ENCODE measurements at regions of chr12 and their contacts with region 1.

Region 1: GRCh38 chr12:40152783-40153383 is 47.0 kb upstream of the SLC2A13 start:
- DNase-seq: peak; percentile 41 to 67 (median 64)
- ATAC-seq: peak; percentile 63
- H3K4me3 ChIP-seq: no peak overlapping the region
- H3K27ac ChIP-seq: no peak overlapping the region
- H3K4me1 ChIP-seq: no peaks in the 10 kb centered on the region
- H3K27me3 ChIP-seq: no peaks in the 10 kb centered on the region
- CTCF ChIP-seq: peak; percentile 47 to 96 (median 73)
- POLR2A ChIP-seq: no peak

Region 2: GRCh38 chr12:39972119-39972518 is 180.8 kb before region 1 on chr12:
- intact Hi-C with region 1: no loop called
- DNase-seq: no peak
- ATAC-seq: no peak
- H3K4me3 ChIP-seq: no peak overlapping the region
- H3K27ac ChIP-seq: no peak overlapping the region
- H3K4me1 ChIP-seq: no peaks in the 10 kb centered on the region
- H3K27me3 ChIP-seq: no peaks in the 10 kb centered on the region
- CTCF ChIP-seq: no peak
- POLR2A ChIP-seq: no peak

Region 3: DNA sequence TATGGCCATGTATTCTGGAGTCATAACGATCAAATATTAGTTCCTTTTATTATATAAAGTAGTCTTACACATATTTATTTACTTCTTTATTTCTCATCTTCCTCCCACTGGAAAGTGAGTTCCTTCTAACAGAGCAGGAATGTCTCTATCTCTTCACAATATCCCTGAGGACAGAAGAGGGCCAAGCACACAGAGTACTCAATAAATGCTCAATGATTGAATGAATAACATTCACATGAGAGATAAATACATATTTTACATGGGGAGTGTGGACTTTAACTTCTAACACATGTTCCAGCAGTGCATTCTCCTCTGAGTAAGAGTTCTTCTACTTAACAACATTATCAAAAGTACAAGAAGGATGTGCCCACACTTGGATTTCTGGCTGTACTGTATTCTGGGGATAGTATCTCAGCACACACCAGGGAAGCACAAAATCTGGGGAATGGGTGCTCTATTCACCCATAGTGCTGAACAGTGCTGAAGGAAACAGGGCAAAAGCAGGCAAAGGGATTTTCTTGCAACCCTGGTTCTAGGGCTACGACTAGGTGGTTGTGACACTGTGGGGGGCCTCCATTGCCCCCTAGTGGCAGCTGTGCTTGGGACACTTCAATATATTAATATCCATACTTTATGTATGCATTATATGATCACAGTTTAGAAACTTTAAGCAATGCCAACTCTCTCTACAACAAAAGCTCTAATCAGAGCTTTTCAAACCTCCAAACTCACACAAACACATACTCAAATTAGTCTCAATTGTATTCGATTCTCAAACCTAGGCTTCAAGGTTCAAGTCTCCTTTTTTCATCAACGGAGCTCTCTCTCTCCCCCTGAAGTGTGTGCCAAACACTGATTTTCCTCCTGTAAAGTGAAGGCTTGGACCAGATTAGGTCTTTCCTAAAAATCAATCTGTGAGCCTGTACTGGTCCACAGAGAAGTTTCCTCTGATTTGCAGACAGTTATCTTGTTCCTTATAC is 162.5 kb before region 1 on chr12:
- intact Hi-C with region 1: no loop called
- DNase-seq: peak; percentile 59 to 78 (median 62)
- ATAC-seq: peak; percentile 65
- H3K4me3 ChIP-seq: no peak overlapping the region
- H3K27ac ChIP-seq: no peak overlapping the region
- H3K4me1 ChIP-seq: no peaks in the 10 kb centered on the region
- H3K27me3 ChIP-seq: no peaks in the 10 kb centered on the region
- CTCF ChIP-seq: peak; percentile 65 to 86 (median 77)
- POLR2A ChIP-seq: no peak

Region 4: DNA sequence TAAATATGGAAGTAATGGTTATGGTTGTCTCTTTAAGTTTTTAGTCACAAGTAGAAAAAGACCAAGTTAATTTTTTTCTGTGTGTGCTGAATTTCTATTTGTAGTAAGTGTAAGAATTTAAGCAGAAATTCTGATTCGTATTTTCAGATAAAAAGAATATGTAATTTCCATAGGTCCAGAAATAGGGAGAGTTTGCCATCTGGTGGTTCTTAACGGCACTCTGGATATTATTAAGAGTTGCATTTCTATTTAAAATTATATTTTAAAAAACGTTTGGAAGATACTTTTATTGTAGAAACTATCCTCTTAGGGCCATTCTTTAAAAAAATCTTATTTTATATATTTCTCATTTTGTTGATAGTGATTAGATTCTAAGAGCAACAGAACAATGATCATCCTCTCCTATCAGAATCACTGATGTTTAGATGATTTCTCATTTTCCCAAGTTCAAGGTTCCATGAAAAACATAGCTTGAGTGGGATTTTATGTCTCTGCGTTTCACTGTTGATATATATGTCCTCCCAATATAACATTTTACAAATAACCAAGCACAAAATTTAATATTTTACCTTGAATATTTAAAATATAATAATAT is 160.2 kb after region 1 on chr12:
- intact Hi-C with region 1: loop called (anchors 10 kb)
- DNase-seq: no peak
- ATAC-seq: no peak
- H3K4me3 ChIP-seq: no peak overlapping the region
- H3K27ac ChIP-seq: no peak overlapping the region
- H3K4me1 ChIP-seq: no peaks in the 10 kb centered on the region
- H3K27me3 ChIP-seq: no peaks in the 10 kb centered on the region
- CTCF ChIP-seq: peak in 6 of 7 experiments; percentile 32 to 58 (median 47)
- POLR2A ChIP-seq: no peak